ENCODE measurements at regions of chr1 and their contacts with region 1.

Region 1: DNA sequence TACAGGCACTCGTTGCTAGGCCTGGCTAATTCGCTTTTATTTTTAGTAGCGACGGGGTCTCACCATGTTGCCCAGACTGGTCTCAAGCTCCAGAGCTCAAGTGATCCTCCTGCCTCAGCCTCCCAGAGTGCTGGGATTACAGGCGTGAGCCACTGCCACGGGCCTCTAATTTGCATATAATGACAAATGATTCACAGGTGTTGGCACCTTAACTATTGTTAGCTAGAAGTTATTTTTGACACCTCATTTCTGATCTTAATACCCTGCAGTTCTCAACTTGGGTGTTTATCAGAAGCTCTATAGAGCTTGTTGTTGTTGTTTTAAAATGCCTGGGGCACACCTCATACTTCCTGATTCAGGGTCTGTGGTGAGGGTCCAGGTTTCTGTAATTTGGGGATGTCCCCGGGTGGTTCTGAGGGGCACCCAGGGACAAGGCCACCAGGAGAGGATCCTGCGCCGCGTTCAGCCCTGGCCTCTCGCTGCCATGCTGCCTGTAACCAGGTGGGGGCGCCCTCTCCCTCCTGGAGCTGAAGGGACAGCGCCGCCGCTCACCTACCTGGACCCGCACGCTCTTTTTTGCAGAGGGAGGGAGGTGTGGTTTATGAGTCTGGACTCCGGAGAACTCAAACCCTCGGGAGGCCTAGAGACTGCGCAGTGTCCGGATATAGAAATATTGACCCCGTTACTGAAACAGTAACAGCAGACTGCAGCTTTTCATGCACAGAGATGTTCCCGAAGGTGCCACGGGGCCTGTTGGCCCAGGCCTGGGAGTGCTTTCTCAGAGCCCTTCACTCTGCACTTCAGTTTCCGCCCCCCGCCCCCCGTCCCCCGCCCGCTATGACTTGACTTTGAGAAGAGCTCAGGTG is 23.0 kb upstream of the NEK2 start:
- DNase-seq: peak; percentile 81
- ATAC-seq: peak; percentile 95 to 99
- H3K4me3 ChIP-seq: no peak overlapping the region
- H3K27ac ChIP-seq: peak overlapping the region; percentile 66 to 80
- H3K4me1 ChIP-seq: peaks cover 8% of the 10 kb centered on the region; the same call in 2 of the 3 replicates
- CTCF ChIP-seq: peak; percentile 97
- EP300 ChIP-seq: no peak
- POLR2A ChIP-seq: no peak
- RAD21 ChIP-seq: peak; percentile 99

Region 2: GRCh38 chr1:211632631-211633523 is 65.5 kb before region 1 on chr1:
- CTCF ChIA-PET with region 1: no interaction called
- POLR2A ChIA-PET with region 1: no interaction called
- DNase-seq: no peak
- ATAC-seq: peak in 1 of 2 experiments; percentile 19; a peak in 4 of 6 replicates
- H3K4me3 ChIP-seq: no peak overlapping the region
- H3K27ac ChIP-seq: peak overlapping the region in 1 of 2 experiments; percentile 57; a peak in 3 of 6 replicates
- H3K4me1 ChIP-seq: peaks cover 30% of the 10 kb centered on the region
- CTCF ChIP-seq: no peak
- EP300 ChIP-seq: no peak
- POLR2A ChIP-seq: no peak
- RAD21 ChIP-seq: no peak

Region 3: GRCh38 chr1:211724687-211725196 is 26.3 kb after region 1 on chr1:
- CTCF ChIA-PET with region 1: interaction called, 35 read pairs
- POLR2A ChIA-PET with region 1: no interaction called
- DNase-seq: no peak
- ATAC-seq: no peak
- H3K4me3 ChIP-seq: no peak overlapping the region
- H3K27ac ChIP-seq: no peak overlapping the region
- H3K4me1 ChIP-seq: peaks cover 8% of the 10 kb centered on the region
- CTCF ChIP-seq: no peak
- EP300 ChIP-seq: no peak
- POLR2A ChIP-seq: no peak
- RAD21 ChIP-seq: no peak

Region 4: GRCh38 chr1:211761400-211761799 is 63.0 kb after region 1 on chr1:
- CTCF ChIA-PET with region 1: interaction called, 19 read pairs
- POLR2A ChIA-PET with region 1: no interaction called
- DNase-seq: no peak
- ATAC-seq: no peak
- H3K4me3 ChIP-seq: no peak overlapping the region
- H3K27ac ChIP-seq: no peak overlapping the region
- H3K4me1 ChIP-seq: no peaks in the 10 kb centered on the region
- CTCF ChIP-seq: no peak
- EP300 ChIP-seq: no peak
- POLR2A ChIP-seq: no peak
- RAD21 ChIP-seq: no peak

Region 5: GRCh38 chr1:211814313-211814712 is 115.9 kb after region 1 on chr1:
- CTCF ChIA-PET with region 1: interaction called, 19 read pairs
- POLR2A ChIA-PET with region 1: no interaction called
- DNase-seq: no peak
- ATAC-seq: no peak
- H3K4me3 ChIP-seq: no peak overlapping the region
- H3K27ac ChIP-seq: peak overlapping the region in 1 of 2 experiments; percentile 34; a peak in 1 of 6 replicates
- H3K4me1 ChIP-seq: peaks cover 11% of the 10 kb centered on the region; the same call in 2 of the 3 replicates
- CTCF ChIP-seq: no peak
- EP300 ChIP-seq: no peak
- POLR2A ChIP-seq: no peak
- RAD21 ChIP-seq: no peak

Region 6: DNA sequence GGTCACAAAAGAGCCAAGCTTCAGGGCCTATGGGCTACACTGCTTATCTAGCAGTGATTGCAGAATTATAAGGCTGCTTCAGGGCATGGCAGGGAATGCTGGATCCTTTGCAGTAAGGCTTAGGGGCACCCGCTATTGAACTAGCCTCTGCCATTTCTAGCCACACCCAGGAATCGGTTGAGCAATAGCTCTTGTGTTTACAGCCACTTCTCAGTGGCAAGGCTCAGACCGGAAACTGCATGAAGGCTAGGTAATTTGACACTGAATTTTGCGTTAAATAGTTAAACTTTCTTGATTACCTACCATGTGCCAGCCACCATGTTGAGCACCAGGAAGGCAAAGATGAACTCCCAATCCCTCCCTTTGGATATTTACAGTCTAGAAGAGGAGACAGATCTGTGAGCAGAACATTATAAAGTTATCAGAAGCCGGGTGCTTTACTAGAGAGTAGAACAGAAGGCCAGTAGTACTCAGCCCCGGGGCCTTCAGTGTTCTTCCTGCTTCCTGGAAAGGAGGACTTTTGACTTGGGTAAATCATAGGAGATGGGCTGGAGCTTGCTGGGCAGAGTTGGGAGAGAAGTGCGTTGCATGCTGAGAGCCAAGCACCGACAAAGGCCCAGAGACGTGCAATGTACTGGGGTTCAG is 230.7 kb after region 1 on chr1:
- CTCF ChIA-PET with region 1: interaction called, 14 read pairs
- POLR2A ChIA-PET with region 1: no interaction called
- DNase-seq: peak; percentile 51 to 80
- ATAC-seq: peak; percentile 55 to 72; a peak in 4 of 6 replicates
- H3K4me3 ChIP-seq: no peak overlapping the region
- H3K27ac ChIP-seq: peak overlapping the region; percentile 63 to 85
- H3K4me1 ChIP-seq: peaks cover 54% of the 10 kb centered on the region
- CTCF ChIP-seq: no peak
- EP300 ChIP-seq: no peak
- POLR2A ChIP-seq: no peak
- RAD21 ChIP-seq: no peak

Region 7: GRCh38 chr1:212035123-212035834 is 336.9 kb after region 1 on chr1 and contains the starts of genes DTL and INTS7:
- CTCF ChIA-PET with region 1: interaction called, 38 read pairs
- POLR2A ChIA-PET with region 1: interaction called, 10 read pairs
- DNase-seq: peak; percentile 99
- ATAC-seq: peak; percentile 87 to 92
- H3K4me3 ChIP-seq: peak within 1 kb of the TSS; percentile 65
- H3K27ac ChIP-seq: peak within 1 kb of the TSS; percentile 85 to 90
- H3K4me1 ChIP-seq: peaks cover 72% of the 10 kb centered on the region
- CTCF ChIP-seq: peak; percentile 94
- EP300 ChIP-seq: no peak
- POLR2A ChIP-seq: peak; percentile 73
- RAD21 ChIP-seq: peak in 1 of 2 experiments; percentile 30; a peak in 2 of 5 replicates
- polyA plus RNA-seq, gene DTL: 28.5 and 30.2 TPM in 2 replicates
- polyA plus RNA-seq, gene INTS7: 47.2 and 61.8 TPM in 2 replicates

Measured in A549 (cell line).